Upper lobe of right lung (tissue), 1 donor: ENCODE measurements at regions of chrX and their contacts with region 1.

Region 1: DNA sequence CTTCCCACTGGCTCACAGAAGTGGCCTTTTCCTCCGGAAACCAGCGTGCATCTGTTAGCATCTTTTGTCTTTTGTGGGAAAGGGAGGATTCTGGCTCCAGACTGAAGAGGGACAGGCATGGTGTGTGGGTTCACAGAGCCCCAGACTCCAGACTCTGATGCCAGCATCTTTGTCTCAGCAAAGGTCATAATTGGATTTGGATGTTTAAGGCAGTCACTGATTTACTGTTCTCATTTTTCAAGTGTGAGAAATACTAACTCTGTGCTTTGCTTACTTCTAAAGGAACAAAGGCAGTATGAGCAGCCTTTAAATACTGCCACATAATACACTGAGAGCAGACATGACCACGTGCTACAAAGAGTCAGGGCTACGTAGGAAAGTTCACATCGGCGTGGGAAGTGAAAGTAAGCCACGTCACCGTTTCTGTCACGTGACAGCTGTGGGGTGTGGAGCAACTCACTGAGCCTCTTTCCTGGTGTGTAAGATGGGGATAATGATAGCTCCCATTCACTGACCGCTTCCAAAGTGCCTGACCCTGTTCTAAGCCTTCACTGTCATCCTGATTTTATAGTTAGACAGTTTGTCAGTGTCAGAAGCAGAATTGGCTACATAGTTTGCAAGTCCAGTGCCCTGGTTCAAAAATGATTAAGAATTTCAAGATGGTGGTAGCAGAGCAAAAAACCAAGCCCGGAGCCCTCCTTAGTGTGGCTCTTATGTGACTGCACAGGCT is 24.8 kb upstream of the TMSB4X start:
- DNase-seq: peak; percentile 78
- ATAC-seq: peak; percentile 84
- H3K4me3 ChIP-seq: peak overlapping the region; percentile 1
- H3K27ac ChIP-seq: peak overlapping the region; percentile 63
- H3K4me1 ChIP-seq: peaks cover 21% of the 10 kb centered on the region
- H3K27me3 ChIP-seq: no peaks in the 10 kb centered on the region
- CTCF ChIP-seq: no peak

Region 2: DNA sequence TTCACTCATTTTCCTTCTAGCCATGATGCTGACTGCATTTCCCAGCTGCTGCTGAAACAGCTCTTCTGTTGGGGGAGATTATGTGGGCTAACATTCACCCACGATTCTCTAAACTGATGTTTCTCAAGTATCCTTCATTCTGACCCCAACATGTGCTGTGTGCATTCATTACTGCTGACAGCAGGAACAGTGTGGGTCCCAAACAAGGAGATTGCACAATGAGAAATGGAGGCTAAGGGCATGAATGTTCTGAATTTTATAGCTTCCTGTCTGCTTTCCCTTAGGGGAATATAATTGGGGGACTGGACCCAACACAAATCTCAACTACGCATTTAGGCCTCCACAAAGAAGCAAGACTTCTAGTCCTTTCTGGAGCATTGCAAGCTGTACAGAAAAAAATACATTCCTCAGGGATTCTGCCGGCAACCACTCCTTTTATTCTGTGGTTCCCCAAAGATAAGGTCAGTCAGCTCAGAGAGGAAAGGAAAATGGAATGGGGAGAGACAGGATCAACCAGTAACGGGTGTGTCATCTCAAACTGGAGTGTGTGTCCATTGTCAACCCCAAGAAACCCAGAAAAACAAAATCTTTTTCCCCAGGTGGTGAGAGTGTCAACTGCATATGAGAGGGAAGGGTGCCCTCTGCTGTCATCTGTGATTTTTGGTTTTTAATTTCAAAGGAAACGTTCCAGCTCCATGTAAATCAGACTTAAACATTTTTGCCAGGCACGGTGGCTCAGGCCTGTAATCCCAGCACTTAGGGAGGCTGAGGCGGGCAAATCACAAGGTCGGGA is 537.8 kb after region 1 on chrX:
- intact Hi-C with region 1: loop called (anchors 10 kb)
- DNase-seq: no peak
- ATAC-seq: peak; percentile 88
- H3K4me3 ChIP-seq: no peak overlapping the region
- H3K27ac ChIP-seq: peak overlapping the region; percentile 79
- H3K4me1 ChIP-seq: peaks cover 2% of the 10 kb centered on the region
- H3K27me3 ChIP-seq: no peaks in the 10 kb centered on the region
- CTCF ChIP-seq: peak; percentile 56